Esophagus muscularis mucosa (tissue), 4 donors: ENCODE measurements at regions of chr3 and their contacts with region 1.

Region 1: DNA sequence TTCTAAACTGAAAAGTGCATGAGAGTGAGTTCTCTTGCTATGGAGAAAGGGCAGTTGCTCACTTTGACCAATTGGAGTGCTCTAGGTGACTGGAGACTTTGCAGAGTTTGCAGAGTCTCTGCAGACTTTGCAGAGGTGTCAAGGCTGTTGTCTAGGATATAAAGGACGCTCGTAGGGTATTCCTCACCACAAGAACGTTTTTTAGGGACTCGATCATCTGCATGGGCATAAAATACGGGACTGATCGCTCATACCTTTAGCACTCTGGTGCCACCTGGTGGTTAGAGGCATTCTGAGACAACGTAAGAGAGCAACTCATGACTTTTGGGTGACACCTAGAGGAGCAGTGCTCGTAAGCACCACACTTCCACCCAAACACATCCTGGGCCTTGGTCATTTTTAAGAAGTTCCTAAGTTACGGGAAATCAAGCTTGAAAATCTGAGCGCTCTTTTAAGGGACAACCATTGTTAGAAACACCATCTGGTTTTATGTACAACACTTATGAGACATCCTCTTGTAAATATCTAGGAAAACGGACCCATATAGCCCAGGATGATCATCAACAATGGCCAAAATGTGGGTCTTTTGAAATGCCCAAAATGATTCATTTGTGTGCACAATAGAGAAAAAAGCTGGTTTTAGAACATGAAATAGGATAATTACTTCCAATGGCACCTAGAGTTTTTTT is 51.6 kb upstream of the XCR1 start:
- DNase-seq: peak; percentile 97
- H3K4me3 ChIP-seq: peak overlapping the region in 1 of 4 donors; percentile 43
- H3K27ac ChIP-seq: no peak overlapping the region
- H3K4me1 ChIP-seq: peaks cover 0 to 4% (median 2%) of the 10 kb centered on the region in 4 donors
- H3K27me3 ChIP-seq: no peaks in the 10 kb centered on the region
- CTCF ChIP-seq: peak; percentile 96 to 98 (median 98)
- EP300 ChIP-seq: no peak
- POLR2A ChIP-seq: no peak

Region 2: DNA sequence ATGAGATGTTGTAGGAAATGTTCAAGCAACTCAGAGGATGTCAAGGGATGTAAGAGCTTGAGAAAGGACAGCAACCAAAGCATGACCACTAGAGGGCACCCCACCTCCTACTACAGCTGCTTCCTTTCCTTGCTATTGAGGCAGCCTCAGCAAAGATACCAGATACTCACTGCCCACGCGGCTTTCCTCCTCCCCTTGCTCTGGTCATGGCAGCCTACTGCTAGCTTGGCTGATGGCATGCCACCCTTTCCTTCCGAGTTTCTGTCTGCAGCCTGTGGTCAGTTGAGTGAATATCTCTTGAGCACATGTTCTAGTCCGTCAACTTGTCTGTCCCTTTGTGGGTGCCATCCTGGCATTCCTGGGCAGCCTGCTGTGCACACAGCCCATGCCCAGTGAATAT is 140.0 kb before region 1 on chr3:
- intact Hi-C with region 1: loop called (anchors 1 kb)
- DNase-seq: peak; percentile 94
- H3K4me3 ChIP-seq: no peak overlapping the region
- H3K27ac ChIP-seq: no peak overlapping the region
- H3K4me1 ChIP-seq: peaks cover 7 to 19% (median 11%) of the 10 kb centered on the region in 4 donors
- H3K27me3 ChIP-seq: no peaks in the 10 kb centered on the region
- CTCF ChIP-seq: peak; percentile 76 to 91 (median 86)
- EP300 ChIP-seq: no peak
- POLR2A ChIP-seq: no peak